Right ventricle myocardium superior (tissue), 1 donor: ENCODE measurements at regions of chr6 and their contacts with region 1.

Region 1: DNA sequence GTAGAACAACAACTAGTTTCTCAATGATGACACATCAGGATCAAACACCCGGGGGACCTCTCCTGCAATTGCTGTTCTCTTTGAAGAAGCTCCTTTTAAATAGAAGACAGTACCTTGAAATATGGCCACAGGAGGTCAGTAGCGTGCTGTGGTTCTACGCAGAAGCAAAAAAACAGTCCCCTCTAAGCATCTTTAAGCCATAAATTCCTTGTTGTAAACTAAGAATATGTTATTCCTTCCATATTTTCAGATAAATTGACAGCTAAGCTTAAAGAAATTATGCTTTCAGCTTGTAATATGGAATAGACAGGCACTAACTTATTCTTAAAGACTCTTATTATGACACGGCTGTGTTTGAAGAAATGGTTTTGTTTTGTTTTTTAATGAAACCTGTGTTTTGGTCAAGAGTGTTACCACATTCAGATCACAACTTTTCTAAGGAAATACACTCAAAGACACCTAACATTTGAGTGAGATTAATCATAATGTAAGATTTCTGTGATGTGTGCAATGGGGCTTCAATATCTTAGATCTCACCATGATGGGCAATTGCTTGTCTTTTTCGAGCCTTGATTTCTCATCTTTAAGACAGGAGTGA is 49.7 kb upstream of the IL20RA start:
- DNase-seq: peak; percentile 44
- ATAC-seq: peak; percentile 88

Region 2: DNA sequence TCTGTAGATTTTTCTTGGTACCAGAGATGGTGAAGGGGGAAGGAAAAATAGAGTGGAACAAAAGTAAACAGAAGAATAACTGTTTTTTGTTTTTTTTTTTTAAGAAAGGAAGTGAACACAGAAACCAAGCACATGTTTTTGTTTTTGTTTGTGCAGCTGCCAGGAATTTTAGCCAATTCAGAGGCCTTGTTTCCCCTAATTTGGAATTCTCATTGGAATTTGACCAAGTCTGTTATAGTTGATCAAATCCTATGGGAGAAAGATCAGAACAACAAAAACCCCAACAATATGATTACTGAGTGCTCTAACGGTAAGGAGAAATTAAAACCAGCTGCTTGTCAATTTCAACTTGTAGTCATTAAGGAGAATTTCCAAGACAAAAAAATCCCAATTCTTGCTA is 97.2 kb after region 1 on chr6:
- intact Hi-C with region 1: loop called (anchors 5 kb)
- DNase-seq: no peak
- ATAC-seq: peak; percentile 50

Region 3: GRCh38 chr6:137313928-137314855 is 219.7 kb after region 1 on chr6:
- intact Hi-C with region 1: loop called (anchors 2 kb)
- DNase-seq: peak; percentile 83
- ATAC-seq: peak; percentile 97

Region 4: DNA sequence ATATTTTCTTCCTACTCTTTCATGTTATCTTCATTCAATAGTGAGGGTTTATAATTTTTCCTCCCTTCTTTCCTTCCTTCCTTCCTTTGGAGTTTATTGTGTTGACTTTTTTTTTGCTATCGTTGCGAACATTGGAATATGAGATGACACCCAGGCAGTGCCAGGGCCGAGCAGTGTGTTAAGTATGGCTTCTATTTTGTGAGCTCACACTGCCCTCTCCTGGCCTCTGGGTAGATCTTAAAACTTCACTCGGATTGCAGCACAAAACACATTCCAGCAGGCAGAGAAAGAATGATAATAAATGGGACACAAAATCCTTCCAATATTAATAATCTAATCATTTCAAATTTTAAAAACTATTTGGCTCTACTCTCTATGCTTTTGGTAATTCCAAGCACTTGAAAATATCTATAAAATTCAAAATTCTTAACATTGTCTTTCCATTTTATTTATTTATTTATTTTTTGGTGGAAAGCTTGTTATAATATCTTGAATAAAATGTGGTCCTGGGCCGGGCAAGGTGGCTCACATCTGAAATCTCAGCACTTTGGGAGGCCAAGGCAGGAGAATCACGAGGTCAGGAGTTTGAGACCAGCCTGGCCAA is 547.1 kb after region 1 on chr6:
- intact Hi-C with region 1: loop called (anchors 10 kb)
- DNase-seq: peak; percentile 72
- ATAC-seq: peak; percentile 95